RWPE1 (cell line): ENCODE measurements at regions of chr3 and their contacts with region 1.

Region 1: DNA sequence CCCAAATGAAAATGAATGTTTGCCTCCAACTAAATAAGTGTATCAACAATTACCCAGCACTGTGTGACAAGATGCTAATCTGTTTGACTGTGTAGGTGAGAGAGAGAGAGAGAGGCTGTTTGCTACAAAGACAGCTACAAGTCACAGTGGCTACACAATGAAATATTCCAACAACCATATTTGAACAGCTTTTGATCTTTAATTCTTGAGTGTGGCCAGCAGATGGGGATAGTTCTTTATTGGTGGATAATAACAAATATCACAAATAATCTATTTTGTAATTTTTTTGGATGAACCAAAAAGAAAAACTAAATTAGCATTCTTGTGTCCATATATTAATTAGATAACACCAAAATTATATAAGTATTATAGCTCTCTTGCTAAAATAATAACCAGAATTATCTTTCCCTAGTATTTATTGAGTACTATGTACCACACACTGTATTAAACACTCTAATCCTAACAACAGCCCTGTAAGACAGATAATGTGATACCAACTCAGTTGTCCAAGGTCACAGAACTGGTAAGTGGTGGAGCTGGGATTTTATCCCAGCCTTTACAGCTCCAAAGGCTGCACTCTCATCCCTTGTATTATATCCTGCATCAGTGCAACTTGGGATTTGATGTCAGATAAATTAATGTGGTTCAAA is 61.9 kb upstream of the C3orf80 start:
- DNase-seq: peak; percentile 39
- H3K27ac ChIP-seq: no peak overlapping the region
- CTCF ChIP-seq: peak; percentile 49

Region 2: DNA sequence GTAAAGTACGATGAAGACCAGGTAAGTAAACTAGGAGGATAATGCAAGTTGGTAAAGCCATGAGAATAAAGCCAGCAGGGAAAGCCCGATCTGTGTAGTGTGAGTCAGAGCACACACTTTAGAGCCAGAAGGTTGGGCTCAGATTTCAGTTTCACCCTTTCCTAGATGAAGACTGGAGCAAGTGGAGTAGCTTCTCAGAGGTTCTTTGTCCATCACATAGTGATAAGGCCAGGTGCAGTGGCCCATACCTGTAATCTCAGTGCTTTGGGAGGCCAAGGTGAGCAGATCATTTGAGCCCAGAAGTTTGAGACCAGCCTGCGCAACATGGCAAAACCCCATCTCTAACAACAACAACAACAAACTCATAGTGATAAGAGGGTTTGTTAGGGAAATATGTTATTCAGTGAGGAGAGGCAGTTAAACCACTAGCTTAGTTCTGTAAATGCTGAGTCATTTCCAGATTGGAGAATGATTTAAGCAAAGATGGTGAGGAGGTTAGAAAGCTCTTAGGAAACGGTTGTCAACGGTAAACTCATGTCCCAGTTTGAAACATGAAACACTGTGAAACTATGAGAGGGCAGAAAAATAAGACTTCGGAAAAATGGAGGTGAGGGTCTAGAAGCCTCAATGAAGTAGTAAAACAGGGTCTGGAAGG is 135.7 kb before region 1 on chr3:
- CTCF ChIA-PET with region 1: interaction called, 11 read pairs
- POLR2A ChIA-PET with region 1: no interaction called
- DNase-seq: peak; percentile 25
- H3K27ac ChIP-seq: no peak overlapping the region
- CTCF ChIP-seq: no peak

Region 3: GRCh38 chr3:160413613-160414248 is 250.4 kb after region 1 on chr3:
- CTCF ChIA-PET with region 1: interaction called, 12 read pairs
- POLR2A ChIA-PET with region 1: no interaction called
- DNase-seq: peak; percentile 59
- H3K27ac ChIP-seq: no peak overlapping the region
- CTCF ChIP-seq: peak; percentile 85